SK-N-SH (cell line): ENCODE measurements at regions of chr22 and their contacts with region 1.

Region 1: DNA sequence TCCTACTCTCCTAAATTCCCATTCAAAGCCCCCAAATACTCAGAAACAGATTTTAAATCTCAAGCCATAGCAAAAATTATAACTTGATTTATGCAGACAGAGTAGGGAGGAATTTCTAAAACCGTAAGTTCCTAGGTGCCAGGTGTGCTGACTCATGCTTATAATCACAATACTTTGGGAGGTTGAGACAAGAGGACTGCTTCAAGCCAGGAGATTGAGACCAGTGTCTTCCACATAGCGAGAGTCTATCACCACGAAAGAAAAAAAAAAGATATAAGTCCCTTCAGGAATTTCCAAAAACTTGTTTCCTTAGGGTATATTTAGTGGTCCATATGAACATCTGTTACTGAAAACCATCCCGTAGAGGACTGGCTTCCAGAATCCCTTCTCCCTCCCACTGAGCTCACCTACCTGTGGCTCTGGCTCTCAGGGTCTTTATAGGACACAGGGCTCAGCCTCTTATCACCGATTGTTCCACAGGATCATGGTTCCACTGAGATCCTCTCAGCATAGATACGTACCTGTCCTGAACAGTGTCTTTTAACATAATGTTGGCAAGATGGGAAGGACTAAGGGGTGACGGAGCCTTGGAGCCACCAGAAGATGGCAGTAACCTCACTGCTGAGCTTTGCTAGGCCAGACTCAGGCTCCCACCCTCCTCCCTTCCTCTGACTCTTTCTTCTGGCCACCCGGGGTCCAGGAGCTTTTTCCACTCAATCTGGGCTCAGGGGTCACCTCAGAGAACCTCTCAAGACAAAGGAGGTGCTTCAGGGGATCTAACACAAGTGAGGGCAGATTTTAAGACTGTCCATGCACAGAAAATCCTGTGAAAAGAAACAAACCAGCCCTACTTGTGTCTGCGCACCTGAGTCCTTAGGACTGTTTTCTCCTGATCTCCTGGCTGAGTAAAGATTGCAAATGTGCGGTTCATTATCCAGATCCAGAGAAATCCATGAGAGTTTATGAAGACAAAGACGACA is 117.5 kb upstream of the TOP3B start:
- DNase-seq: no peak
- H3K4me3 ChIP-seq: no peak overlapping the region
- H3K27ac ChIP-seq: no peak overlapping the region
- H3K4me1 ChIP-seq: no peaks in the 10 kb centered on the region
- H3K27me3 ChIP-seq: peaks cover 22% of the 10 kb centered on the region
- CTCF ChIP-seq: peak; percentile 38
- EP300 ChIP-seq: no peak
- RAD21 ChIP-seq: no peak

Region 2: GRCh38 chr22:22110548-22111266 is 10.6 kb after region 1 on chr22:
- CTCF ChIA-PET with region 1: interaction called, 11 read pairs
- POLR2A ChIA-PET with region 1: no interaction called
- DNase-seq: peak; percentile 76
- H3K4me3 ChIP-seq: no peak overlapping the region
- H3K27ac ChIP-seq: peak overlapping the region in 1 of 2 experiments; percentile 53; a peak in 2 of 4 replicates
- H3K4me1 ChIP-seq: no peaks in the 10 kb centered on the region
- H3K27me3 ChIP-seq: no peaks in the 10 kb centered on the region
- CTCF ChIP-seq: peak; percentile 63
- EP300 ChIP-seq: no peak
- RAD21 ChIP-seq: peak; percentile 48

Region 3: DNA sequence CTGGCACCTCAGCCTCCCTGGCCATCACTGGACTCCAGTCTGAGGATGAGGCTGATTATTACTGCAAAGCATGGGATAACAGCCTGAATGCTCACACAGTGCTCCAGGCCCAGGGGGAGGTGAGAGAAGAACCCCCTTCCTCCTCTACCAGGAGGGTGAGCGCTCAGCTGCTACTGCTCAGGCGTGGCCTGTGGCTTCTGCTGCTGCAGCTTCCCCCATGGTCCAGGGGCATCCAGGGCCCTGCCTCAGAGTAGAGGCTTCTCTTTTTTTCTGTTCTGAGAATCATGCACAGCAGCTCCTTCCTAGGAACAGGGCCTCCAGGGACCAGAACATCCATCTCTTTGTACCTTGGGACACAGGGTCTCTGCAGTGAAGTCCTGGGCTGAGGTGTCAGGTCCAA is 227.6 kb after region 1 on chr22:
- CTCF ChIA-PET with region 1: no interaction called
- POLR2A ChIA-PET with region 1: no interaction called
- DNase-seq: no peak
- H3K4me3 ChIP-seq: no peak overlapping the region
- H3K27ac ChIP-seq: no peak overlapping the region
- H3K4me1 ChIP-seq: no peaks in the 10 kb centered on the region
- H3K27me3 ChIP-seq: peaks cover 20% of the 10 kb centered on the region
- CTCF ChIP-seq: no peak
- EP300 ChIP-seq: no peak
- RAD21 ChIP-seq: no peak